ENCODE measurements at regions of chr1 and their contacts with region 1.

Region 1: DNA sequence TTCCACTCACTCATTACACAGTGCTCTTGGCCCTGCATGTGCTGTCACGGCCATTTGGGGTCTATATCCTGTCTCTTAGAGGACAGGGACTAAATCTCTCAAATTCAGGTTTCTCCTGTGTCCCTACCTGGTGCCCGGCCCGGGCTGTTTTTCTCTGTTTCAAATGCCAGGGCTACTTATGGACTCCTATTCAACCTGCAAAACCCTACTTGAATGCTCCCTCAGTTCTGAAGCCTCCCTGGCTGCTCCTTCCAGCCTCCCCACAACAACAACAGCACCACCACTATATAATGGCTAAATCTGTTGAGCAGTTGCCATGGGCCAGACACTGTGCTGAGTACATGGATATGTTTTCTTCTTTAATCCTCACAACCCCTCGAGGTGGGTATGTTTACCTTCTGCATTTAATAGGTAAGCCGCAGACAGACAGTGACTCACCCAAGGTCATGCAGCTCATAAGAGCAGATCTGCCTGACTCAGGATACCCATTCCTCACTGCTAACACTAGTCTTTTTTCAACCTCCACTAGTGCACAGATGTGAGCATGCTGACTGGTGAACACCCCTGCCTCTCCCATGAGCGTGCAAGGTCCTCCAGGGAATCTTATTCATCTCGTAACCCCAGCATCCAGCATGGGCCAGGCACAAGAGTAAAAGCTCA is 29.9 kb downstream of the DHRS3 start:
- DNase-seq: no peak
- H3K4me3 ChIP-seq: no peak overlapping the region
- H3K4me3 Mint-ChIP-seq: no peak overlapping the region
- H3K27ac ChIP-seq: no peak overlapping the region
- H3K27ac Mint-ChIP-seq: no peak overlapping the region
- H3K4me1 ChIP-seq: no peaks in the 10 kb centered on the region
- H3K4me1 Mint-ChIP-seq: no peaks in the 10 kb centered on the region
- H3K27me3 ChIP-seq: no peaks in the 10 kb centered on the region
- H3K27me3 Mint-ChIP-seq: peaks cover 0 to 7% (median 5%) of the 10 kb centered on the region in 3 donors
- CTCF ChIP-seq: no peak

Region 2: GRCh38 chr1:12629521-12629956 is 41.4 kb after region 1 on chr1:
- intact Hi-C with region 1: loop called in 1 of 2 experiments (anchors 5 kb)
- DNase-seq: no peak
- H3K4me3 ChIP-seq: no peak overlapping the region
- H3K4me3 Mint-ChIP-seq: no peak overlapping the region
- H3K27ac ChIP-seq: no peak overlapping the region
- H3K27ac Mint-ChIP-seq: no peak overlapping the region
- H3K4me1 ChIP-seq: peaks cover 47 to 57% of the 10 kb centered on the region in 2 donors
- H3K4me1 Mint-ChIP-seq: peaks cover 57% of the 10 kb centered on the region
- H3K27me3 ChIP-seq: no peaks in the 10 kb centered on the region
- H3K27me3 Mint-ChIP-seq: peaks cover 0 to 5% (median 3%) of the 10 kb centered on the region in 3 donors
- CTCF ChIP-seq: no peak

Measured in CD14-positive monocyte (primary cell).